Activated CD4-positive, alpha-beta T cell treated with anti-CD3 and anti-CD28 coated beads for 36 hours (primary cell): ENCODE measurements at regions of chr1 and their contacts with region 1.

Region 1: GRCh38 chr1:202968840-202969295 is 1.8 kb upstream of the CYB5R1 start:
- DNase-seq: peak; percentile 51
- ATAC-seq: peak; percentile 65
- H3K4me3 Mint-ChIP-seq: no peak overlapping the region
- H3K27ac Mint-ChIP-seq: peak overlapping the region; percentile 16
- H3K4me1 Mint-ChIP-seq: peaks cover 27% of the 10 kb centered on the region
- H3K27me3 Mint-ChIP-seq: no peaks in the 10 kb centered on the region

Region 2: GRCh38 chr1:202160377-202160940 is 808.4 kb before region 1 on chr1 and contains the start of gene PTPN7:
- CTCF ChIA-PET with region 1: no interaction called
- POLR2A ChIA-PET with region 1: no interaction called
- intact Hi-C with region 1: loop called in 1 of 2 experiments (anchors 10 kb)
- DNase-seq: peak; percentile 98
- ATAC-seq: peak; percentile 69
- H3K4me3 Mint-ChIP-seq: peak within 1 kb of the TSS; percentile 97
- H3K27ac Mint-ChIP-seq: peak within 1 kb of the TSS; percentile 99
- H3K4me1 Mint-ChIP-seq: peaks cover 80% of the 10 kb centered on the region
- H3K27me3 Mint-ChIP-seq: no peaks in the 10 kb centered on the region
- total RNA-seq, gene PTPN7: 188 to 221 TPM

Region 3: GRCh38 chr1:202835548-202836090 is 133.2 kb before region 1 on chr1:
- CTCF ChIA-PET with region 1: no interaction called
- POLR2A ChIA-PET with region 1: no interaction called
- intact Hi-C with region 1: no loop called
- DNase-seq: peak; percentile 35
- ATAC-seq: peak; percentile 67
- H3K4me3 Mint-ChIP-seq: no peak overlapping the region
- H3K27ac Mint-ChIP-seq: no peak overlapping the region
- H3K4me1 Mint-ChIP-seq: peaks cover 34% of the 10 kb centered on the region
- H3K27me3 Mint-ChIP-seq: no peaks in the 10 kb centered on the region

Region 4: GRCh38 chr1:202926720-202927491 is 42.0 kb before region 1 on chr1 and contains the start of gene KLHL12:
- CTCF ChIA-PET with region 1: interaction called, 3 read pairs
- POLR2A ChIA-PET with region 1: interaction called, 3 read pairs
- intact Hi-C with region 1: loop called (anchors 1 kb)
- DNase-seq: peak; percentile 98
- ATAC-seq: peak; percentile 96
- H3K4me3 Mint-ChIP-seq: peak within 1 kb of the TSS; percentile 86
- H3K27ac Mint-ChIP-seq: peak within 1 kb of the TSS; percentile 85
- H3K4me1 Mint-ChIP-seq: peaks cover 24% of the 10 kb centered on the region
- H3K27me3 Mint-ChIP-seq: no peaks in the 10 kb centered on the region
- total RNA-seq, gene KLHL12: 32.1 to 39.1 TPM

Region 5: DNA sequence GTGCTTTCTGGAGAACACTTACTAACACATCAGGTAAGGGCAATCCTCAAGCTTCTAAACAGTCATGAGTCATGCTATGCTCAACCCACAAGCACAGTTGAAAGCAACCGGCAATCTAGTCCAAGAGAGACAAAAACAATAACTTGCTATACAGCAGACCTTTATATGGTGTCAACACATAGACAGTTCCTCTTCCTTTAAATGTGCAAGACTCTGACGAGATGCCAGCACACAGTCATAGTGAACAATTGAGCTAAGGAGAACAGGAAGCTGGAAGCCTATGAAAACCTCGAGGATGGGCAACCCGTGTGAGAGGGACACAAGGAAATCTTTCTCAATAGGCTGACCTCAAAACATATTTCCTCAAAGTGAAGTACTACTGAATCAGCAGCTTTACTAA is 16.1 kb before region 1 on chr1:
- CTCF ChIA-PET with region 1: interaction called, 4 read pairs
- POLR2A ChIA-PET with region 1: no interaction called
- intact Hi-C with region 1: loop called (anchors 1 kb)
- DNase-seq: no peak
- ATAC-seq: peak; percentile 88
- H3K4me3 Mint-ChIP-seq: no peak overlapping the region
- H3K27ac Mint-ChIP-seq: peak overlapping the region; percentile 45
- H3K4me1 Mint-ChIP-seq: peaks cover 55% of the 10 kb centered on the region
- H3K27me3 Mint-ChIP-seq: no peaks in the 10 kb centered on the region

Region 6: GRCh38 chr1:202998836-202999750 is 30.2 kb after region 1 on chr1:
- CTCF ChIA-PET with region 1: interaction called, 19 read pairs
- POLR2A ChIA-PET with region 1: no interaction called
- intact Hi-C with region 1: loop called in 1 of 2 experiments (anchors 1 kb)
- DNase-seq: peak; percentile 80
- ATAC-seq: peak; percentile 66
- H3K4me3 Mint-ChIP-seq: peak overlapping the region; percentile 50
- H3K27ac Mint-ChIP-seq: peak overlapping the region; percentile 23
- H3K4me1 Mint-ChIP-seq: peaks cover 10% of the 10 kb centered on the region
- H3K27me3 Mint-ChIP-seq: peaks cover 20% of the 10 kb centered on the region

Region 7: DNA sequence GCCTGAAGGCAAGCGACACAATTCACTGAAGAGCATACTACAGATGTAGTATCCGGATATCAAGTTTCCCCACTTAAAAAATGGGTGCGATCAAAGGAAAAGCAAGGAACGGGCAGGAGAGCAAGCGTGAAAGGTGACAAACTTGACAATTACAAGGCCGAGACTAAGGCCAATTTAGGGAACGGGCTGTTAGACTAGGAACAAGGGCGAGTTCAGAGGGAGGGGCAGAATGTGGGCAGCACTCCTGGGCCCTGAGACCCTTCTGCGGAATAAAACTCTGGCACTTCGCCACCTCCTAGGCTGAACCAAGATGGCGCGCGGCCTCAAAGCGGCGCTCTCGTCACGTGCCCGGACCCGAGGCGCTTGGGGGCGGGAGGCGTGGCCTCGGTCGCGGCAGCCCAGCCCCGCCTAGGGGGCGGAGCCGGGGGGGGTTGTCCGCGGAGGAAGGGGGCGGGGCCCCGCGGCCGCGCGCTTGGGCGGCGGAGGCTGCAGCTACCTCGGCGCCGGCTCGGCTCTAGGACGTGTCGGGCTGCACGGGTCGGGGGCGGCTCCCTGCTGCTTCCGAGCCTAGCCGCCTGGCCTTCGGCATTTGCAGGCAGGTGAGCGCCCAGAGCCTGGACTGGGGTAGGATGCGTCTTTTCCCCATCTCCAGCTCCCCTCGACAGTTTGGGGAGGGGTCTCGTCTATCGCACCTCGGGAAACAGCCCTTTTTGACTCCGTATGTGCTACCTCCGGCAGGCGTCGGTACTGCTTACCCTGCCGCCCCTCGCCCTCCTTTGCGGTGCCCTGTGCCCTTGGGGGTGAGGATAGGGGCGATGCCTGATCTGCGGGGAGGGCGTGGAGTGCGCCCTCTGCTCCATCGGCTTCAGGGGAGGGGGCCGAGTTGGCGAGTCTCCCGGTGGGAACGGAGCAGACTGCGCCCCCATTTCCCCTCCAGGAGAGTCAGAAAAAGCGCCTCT is 57.4 kb after region 1 on chr1 and contains the start of gene PPFIA4:
- CTCF ChIA-PET with region 1: no interaction called
- POLR2A ChIA-PET with region 1: no interaction called
- intact Hi-C with region 1: loop called in 1 of 2 experiments (anchors 1 kb)
- DNase-seq: peak; percentile 95
- ATAC-seq: peak; percentile 95
- H3K4me3 Mint-ChIP-seq: peak within 1 kb of the TSS; percentile 82
- H3K27ac Mint-ChIP-seq: peak within 1 kb of the TSS; percentile 84
- H3K4me1 Mint-ChIP-seq: peaks cover 19% of the 10 kb centered on the region
- H3K27me3 Mint-ChIP-seq: peaks cover 4% of the 10 kb centered on the region
- total RNA-seq, gene PPFIA4: 51.2 to 56.4 TPM